Aorta (tissue), 5 donors: ENCODE measurements at regions of chr21 and their contacts with region 1.

Region 1: DNA sequence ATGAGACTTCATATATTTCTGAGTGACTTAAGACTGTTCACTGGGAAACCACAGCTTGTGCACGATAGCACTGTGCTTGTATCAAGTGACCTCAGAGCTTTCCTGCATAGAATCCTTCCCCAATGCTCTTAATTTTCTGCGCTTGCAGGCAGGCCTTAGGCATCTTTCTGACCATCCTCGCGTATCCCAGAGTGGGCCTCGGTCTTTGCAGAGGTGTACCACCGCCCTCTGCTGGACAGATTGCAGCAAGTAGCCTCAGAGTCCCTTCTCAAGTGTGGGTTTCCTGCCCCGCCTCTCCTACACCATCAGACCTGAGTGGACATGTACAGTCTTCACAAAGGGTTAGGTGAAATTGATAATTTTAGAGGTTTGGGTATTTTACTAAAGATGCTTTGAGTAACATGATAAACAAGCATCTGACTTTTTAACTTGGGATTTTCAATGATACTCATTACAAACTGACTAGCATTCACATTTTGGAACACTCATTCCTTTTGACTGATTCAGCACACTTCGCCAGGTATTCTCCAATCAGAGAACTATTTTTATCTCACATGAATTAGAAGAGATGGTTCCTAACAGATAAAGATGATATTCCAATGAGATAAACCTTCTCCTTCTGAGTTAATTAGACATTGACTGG is 246.5 kb upstream of the USP25 start:
- DNase-seq: peak; percentile 90 to 93
- ATAC-seq: peak; percentile 94
- H3K4me3 ChIP-seq: no peak overlapping the region
- H3K27ac ChIP-seq: no peak overlapping the region
- H3K4me1 ChIP-seq: no peaks in the 10 kb centered on the region
- H3K27me3 ChIP-seq: no peaks in the 10 kb centered on the region

Region 2: GRCh38 chr21:14259747-14260146 is 1223.5 kb before region 1 on chr21:
- intact Hi-C with region 1: loop called (anchors 5 kb)
- DNase-seq: no peak
- ATAC-seq: peak; percentile 76
- H3K4me3 ChIP-seq: no peak overlapping the region
- H3K27ac ChIP-seq: no peak overlapping the region
- H3K4me1 ChIP-seq: no peaks in the 10 kb centered on the region
- H3K27me3 ChIP-seq: no peaks in the 10 kb centered on the region

Region 3: DNA sequence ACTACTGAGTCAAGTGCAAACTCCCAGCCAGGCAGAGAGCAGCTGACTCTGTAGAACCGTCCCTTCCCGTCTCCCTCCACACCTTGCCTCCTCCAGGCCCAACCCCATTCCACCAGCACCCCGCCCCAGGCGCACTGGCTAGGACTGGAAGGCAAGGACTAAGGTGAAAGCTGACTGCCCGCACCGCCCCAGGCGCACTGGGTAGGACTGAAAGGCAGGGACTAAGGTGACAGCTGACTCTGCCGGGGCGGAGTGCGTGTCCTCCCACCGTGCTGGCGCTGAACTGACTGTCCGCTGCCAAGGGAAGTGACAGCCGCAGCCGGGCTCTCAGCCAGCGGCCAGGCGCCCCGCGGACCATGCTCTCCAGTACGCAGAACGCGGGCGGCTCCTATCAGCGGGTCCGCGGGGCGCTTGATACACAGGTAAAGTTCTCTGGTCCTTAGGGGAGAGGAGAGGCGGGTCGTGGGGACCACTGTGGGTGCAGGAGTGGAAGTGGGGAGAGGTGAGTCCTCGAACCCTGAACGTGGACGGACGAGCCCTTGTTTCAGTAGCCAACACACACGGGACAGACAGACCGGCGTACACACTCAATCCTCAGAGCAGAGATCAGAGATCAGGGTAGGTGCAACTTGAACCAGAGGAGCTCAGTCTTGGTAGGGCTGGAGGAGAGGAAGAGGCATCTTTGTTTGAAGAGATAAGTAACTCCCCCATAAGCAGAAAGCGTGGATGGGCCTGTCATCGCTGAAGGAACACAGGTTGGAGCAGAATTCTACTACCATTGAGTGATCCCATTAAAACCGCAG is 1209.3 kb before region 1 on chr21:
- intact Hi-C with region 1: loop called in 1 of 2 experiments (anchors 5 kb)
- DNase-seq: peak; percentile 66 to 78
- ATAC-seq: peak; percentile 77
- H3K4me3 ChIP-seq: no peak overlapping the region
- H3K27ac ChIP-seq: no peak overlapping the region
- H3K4me1 ChIP-seq: no peaks in the 10 kb centered on the region
- H3K27me3 ChIP-seq: peaks cover 0 to 2% of the 10 kb centered on the region in 2 donors

Region 4: DNA sequence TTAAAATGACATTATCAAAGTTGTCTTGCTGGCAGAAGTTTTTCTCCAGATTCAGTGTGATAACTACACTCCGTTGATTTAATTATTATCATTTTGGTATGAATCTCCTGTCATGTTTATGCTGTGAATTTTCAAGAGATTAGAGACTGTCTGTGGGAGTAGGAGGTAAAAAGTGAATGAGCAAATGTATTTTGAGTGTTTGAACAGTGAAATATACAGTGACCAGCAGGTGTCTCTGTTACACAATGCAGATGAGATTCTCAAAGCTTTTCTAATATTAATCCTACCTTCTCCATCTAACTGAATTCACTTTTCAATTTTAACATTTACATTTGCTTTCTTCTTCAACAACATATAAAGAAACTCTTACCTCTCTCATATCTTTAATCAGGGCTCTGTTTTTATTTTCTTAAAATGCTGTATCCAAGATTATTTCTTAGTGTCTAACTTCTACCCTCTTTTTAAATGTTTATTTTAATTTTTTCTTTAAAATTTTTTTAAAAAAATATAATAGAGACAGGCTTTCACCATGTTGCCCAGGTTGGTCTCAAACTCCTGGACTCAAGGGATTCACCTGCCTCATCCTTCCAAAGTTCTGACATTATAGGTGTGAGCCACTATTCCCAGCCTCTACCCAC is 1079.5 kb before region 1 on chr21:
- intact Hi-C with region 1: loop called (anchors 5 to 10 kb)
- DNase-seq: no peak
- ATAC-seq: no peak
- H3K4me3 ChIP-seq: no peak overlapping the region
- H3K27ac ChIP-seq: no peak overlapping the region
- H3K4me1 ChIP-seq: no peaks in the 10 kb centered on the region
- H3K27me3 ChIP-seq: no peaks in the 10 kb centered on the region

Region 5: DNA sequence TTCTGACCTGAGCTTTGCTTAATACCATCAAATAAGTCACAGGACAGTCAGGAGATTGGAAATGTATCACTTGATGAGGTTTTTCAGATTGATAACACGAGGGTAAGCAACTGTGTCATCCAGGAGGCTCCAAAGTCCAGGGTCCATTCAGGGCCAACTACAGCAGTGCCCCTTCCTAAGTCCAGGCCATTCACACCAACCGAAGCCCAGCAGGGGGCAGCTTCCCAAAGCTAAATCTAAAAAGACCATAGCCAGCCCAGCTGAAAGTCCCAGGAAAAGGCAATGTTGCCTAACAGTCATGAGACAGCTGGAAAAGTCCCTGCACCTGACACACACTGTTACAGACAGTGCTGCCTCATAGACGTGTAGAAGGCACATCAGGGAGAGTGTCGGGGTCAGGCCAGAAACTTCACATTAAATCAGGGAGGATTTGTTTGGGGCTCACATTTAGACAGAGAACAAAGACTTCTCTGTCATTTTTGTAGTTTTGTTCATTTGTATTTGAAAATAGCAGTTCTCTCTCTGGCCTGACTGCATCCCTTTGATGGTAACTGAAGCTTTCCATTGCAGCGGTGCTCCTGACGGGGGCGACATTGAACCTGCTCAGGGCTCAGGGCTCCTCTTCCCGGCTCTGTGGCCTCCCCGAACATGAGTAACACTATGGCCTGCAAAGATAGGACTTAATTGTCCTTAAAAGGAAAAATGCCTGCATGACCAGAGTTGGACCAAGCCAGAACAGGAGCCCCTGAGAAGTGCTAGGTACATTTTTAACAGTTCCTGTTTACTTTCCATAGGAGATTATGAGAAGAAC is 618.8 kb before region 1 on chr21:
- intact Hi-C with region 1: loop called (anchors 2 to 10 kb)
- DNase-seq: peak; percentile 72 to 79
- ATAC-seq: peak; percentile 81
- H3K4me3 ChIP-seq: no peak overlapping the region
- H3K27ac ChIP-seq: no peak overlapping the region
- H3K4me1 ChIP-seq: peaks cover 0 to 2% of the 10 kb centered on the region in 2 donors
- H3K27me3 ChIP-seq: no peaks in the 10 kb centered on the region

Region 6: GRCh38 chr21:15071009-15071408 is 412.2 kb before region 1 on chr21:
- intact Hi-C with region 1: no loop called
- DNase-seq: no peak
- ATAC-seq: no peak
- H3K4me3 ChIP-seq: no peak overlapping the region
- H3K27ac ChIP-seq: no peak overlapping the region
- H3K4me1 ChIP-seq: no peaks in the 10 kb centered on the region
- H3K27me3 ChIP-seq: no peaks in the 10 kb centered on the region

Region 7: GRCh38 chr21:15365751-15366392 is 117.4 kb before region 1 on chr21:
- intact Hi-C with region 1: no loop called
- DNase-seq: no peak
- ATAC-seq: no peak
- H3K4me3 ChIP-seq: no peak overlapping the region
- H3K27ac ChIP-seq: no peak overlapping the region
- H3K4me1 ChIP-seq: no peaks in the 10 kb centered on the region
- H3K27me3 ChIP-seq: no peaks in the 10 kb centered on the region

Region 8: DNA sequence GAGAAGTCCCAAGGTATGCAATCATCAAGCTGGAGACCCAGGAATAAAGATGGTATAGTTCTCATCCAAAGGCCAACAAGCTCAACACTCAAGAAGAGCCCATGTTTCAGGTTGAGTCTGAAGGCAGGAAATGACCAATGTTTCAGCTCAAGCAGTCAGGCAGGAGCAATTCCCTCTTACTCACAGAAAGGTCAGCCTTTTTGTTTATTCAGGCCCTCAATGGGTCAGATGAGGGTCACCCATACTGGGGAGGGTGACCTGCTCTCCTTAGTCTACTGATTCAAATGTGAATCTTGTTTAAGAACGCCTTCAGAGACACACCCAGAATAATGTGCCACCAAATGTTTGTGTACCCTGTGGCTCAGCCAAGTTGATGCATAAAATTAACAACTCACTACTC is 508.9 kb after region 1 on chr21:
- intact Hi-C with region 1: no loop called
- DNase-seq: no peak
- ATAC-seq: no peak
- H3K4me3 ChIP-seq: no peak overlapping the region
- H3K27ac ChIP-seq: no peak overlapping the region
- H3K4me1 ChIP-seq: no peaks in the 10 kb centered on the region
- H3K27me3 ChIP-seq: no peaks in the 10 kb centered on the region